GM10248 (cell line): ENCODE measurements at regions of chr15 and their contacts with region 1.

Region 1: DNA sequence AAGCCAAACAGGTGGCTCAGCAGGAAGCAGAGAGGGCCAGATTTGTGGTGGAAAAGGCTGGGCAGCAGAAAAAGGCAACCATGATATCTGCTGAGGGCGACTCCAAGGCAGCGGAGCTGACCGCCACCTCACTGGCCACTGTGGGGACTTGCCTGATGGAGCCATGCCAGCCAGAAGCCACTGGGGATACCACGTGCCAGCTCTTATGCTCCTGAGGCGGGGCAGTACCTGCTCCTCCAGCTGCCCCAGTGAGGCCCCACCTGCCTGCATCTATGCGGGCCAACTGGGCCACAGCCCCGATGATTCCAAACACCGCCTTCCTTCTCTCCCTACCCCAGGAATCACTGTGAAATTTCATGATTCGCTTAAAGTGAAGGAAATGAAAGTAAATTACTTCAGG is 22.9 kb upstream of the ARIH1 start:
- DNase-seq: no peak
- CTCF ChIP-seq: no peak

Region 2: GRCh38 chr15:72382146-72382545 is 69.1 kb before region 1 on chr15:
- CTCF ChIA-PET with region 1: no interaction called
- POLR2A ChIA-PET with region 1: no interaction called
- DNase-seq: peak; percentile 26
- CTCF ChIP-seq: peak; percentile 15

Region 3: GRCh38 chr15:72421484-72421883 is 29.7 kb before region 1 on chr15:
- CTCF ChIA-PET with region 1: interaction called, 12 read pairs
- POLR2A ChIA-PET with region 1: no interaction called
- DNase-seq: no peak
- CTCF ChIP-seq: no peak

Region 4: DNA sequence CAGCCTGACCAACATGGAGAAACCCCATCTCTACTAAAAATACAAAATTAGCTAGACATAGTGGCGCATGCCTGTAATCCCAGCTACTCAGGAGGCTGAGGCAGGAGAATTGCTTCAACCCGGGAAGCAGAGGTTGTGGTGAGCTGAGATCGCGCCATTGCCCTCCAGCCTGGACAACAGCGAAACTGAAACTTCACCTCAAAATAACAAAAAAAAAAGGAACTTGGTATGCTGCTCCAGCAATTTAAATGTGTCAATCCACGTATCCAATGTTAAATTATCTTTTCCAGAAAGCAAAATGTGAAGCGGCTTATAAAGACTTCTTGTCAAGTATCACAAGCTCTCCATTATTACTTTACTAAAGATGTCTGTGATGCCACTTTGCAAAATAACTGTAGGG is 13.0 kb after region 1 on chr15:
- CTCF ChIA-PET with region 1: interaction called, 40 read pairs
- POLR2A ChIA-PET with region 1: no interaction called
- DNase-seq: no peak
- CTCF ChIP-seq: no peak

Region 5: GRCh38 chr15:72796515-72797337 is 345.5 kb after region 1 on chr15:
- CTCF ChIA-PET with region 1: no interaction called
- POLR2A ChIA-PET with region 1: no interaction called
- DNase-seq: peak; percentile 76
- CTCF ChIP-seq: peak; percentile 67